Mammary epithelial cell (primary cell): ENCODE measurements at regions of chr15 and their contacts with region 1.

Region 1: GRCh38 chr15:79370716-79371115 is 59.8 kb downstream of the TMED3 start:
- DNase-seq: no peak
- H3K4me3 ChIP-seq: no peak overlapping the region
- H3K27ac ChIP-seq: no peak overlapping the region
- H3K4me1 ChIP-seq: no peaks in the 10 kb centered on the region
- H3K27me3 ChIP-seq: no peaks in the 10 kb centered on the region
- CTCF ChIP-seq: no peak

Region 2: DNA sequence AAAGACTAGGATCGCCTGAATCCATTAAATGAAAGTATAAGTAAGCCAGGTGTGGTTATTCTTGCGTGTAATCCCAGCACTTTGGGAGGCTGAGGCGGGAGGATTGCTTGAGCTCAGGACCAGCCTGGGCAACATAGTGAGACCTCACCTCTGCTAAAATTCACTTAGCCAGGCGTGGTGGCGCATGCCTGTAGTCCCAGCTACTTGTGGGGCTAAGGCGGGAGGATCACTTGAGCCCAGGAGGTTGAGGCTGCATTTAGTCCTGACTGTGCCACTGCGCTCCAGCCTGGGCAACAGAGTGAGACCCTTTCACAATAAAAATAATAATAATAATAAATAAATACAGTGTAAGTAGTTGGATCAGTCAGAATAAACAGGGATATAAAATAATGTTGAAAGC is 888.8 kb before region 1 on chr15:
- CTCF ChIA-PET with region 1: no interaction called
- dilution Hi-C with region 1: no loop called
- in situ Hi-C with region 1: no loop called
- intact Hi-C with region 1: no loop called
- DNase-seq: no peak
- H3K4me3 ChIP-seq: no peak overlapping the region
- H3K27ac ChIP-seq: no peak overlapping the region
- H3K4me1 ChIP-seq: no peaks in the 10 kb centered on the region
- H3K27me3 ChIP-seq: no peaks in the 10 kb centered on the region
- CTCF ChIP-seq: no peak

Region 3: DNA sequence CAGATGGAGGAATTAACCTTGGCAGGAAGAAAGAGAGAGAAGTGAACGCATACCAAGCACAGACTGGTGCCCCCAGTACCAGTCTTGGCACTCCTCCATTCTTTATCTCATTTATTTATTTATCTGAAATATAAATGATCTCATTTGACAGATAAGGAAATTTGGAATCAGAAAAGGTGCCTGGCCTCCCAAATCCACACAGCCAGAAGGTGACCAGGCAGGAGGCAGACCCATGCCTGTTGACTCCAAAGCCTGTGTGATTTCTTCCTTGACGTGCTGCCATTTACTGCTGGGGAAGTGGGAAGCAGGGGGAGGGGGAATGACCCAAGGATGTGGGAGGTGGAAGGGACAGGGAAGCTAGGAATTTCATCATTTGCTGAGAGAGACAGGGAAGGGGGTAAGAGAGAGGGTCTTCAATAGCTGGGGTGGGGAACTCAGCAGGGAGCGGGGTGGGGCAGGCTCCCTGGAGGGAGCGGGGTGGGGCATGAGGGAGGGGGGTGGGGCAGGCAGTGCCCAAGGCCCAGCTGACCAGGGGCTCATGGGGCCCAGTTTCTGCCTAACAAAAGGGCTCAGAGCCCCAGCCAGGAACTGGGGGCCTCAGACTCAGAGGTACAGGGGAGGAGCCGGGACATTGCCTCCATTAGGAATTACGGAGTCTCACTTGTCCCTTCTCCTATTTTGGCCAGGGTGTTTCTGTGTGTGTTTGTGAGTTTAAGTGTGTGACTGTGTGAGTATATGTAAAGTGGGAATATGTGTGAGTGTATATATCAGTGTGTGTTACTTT is 124.4 kb after region 1 on chr15:
- CTCF ChIA-PET with region 1: no interaction called
- dilution Hi-C with region 1: no loop called
- in situ Hi-C with region 1: no loop called
- intact Hi-C with region 1: no loop called
- DNase-seq: no peak
- H3K4me3 ChIP-seq: no peak overlapping the region
- H3K27ac ChIP-seq: no peak overlapping the region
- H3K4me1 ChIP-seq: no peaks in the 10 kb centered on the region
- H3K27me3 ChIP-seq: no peaks in the 10 kb centered on the region
- CTCF ChIP-seq: no peak

Region 4: DNA sequence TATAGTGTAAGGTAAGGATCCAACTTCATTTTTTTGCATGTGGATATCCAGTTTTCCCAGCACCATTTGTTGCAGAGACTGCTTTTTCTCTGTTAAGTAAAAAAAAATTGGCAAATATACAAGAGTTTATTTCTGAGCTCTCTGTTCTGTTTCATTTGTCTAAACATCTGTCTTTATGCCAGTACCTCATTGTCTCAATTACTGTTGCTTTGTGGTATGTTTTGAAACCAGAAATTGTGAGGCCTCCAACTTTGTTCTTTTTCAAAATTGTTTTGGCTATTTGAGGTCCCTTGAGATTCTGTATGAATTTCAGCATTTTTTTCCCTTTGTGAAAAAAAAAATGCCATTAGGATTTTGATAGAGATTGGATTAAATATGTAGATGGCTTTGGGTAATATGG is 211.9 kb after region 1 on chr15:
- CTCF ChIA-PET with region 1: interaction called, 14 read pairs
- dilution Hi-C with region 1: no loop called
- in situ Hi-C with region 1: no loop called
- intact Hi-C with region 1: no loop called
- DNase-seq: no peak
- H3K4me3 ChIP-seq: no peak overlapping the region
- H3K27ac ChIP-seq: no peak overlapping the region
- H3K4me1 ChIP-seq: no peaks in the 10 kb centered on the region
- H3K27me3 ChIP-seq: no peaks in the 10 kb centered on the region
- CTCF ChIP-seq: no peak